SK-N-SH (cell line): ENCODE measurements at regions of chr7 and their contacts with region 1.

Region 1: GRCh38 chr7:90424720-90425119 is 21.5 kb downstream of the CLDN12 start:
- DNase-seq: no peak
- H3K4me3 ChIP-seq: no peak overlapping the region
- H3K27ac ChIP-seq: no peak overlapping the region
- H3K4me1 ChIP-seq: no peaks in the 10 kb centered on the region
- H3K27me3 ChIP-seq: no peaks in the 10 kb centered on the region
- CTCF ChIP-seq: no peak
- EP300 ChIP-seq: no peak
- RAD21 ChIP-seq: no peak

Region 2: DNA sequence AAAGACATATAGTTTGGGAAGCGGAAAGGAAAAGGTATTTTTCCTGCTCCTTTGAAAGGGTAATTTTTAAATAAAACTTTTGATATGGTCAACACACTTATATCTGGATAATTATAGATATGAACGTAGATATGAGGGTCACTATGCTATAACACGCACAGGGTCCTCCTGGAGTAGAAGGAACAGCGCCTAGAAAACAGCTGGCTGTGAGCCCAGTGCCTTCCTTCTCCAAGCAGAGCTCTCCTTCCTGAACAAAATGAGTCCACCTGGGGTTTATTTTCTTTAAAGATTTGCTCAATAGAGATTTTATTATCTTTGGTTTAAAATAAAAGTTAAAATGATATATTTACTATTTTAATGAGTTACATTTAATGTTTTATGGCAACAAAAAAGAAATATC is 257.4 kb before region 1 on chr7:
- CTCF ChIA-PET with region 1: interaction called, 15 read pairs
- POLR2A ChIA-PET with region 1: no interaction called
- DNase-seq: no peak
- H3K4me3 ChIP-seq: no peak overlapping the region
- H3K27ac ChIP-seq: no peak overlapping the region
- H3K4me1 ChIP-seq: no peaks in the 10 kb centered on the region
- H3K27me3 ChIP-seq: no peaks in the 10 kb centered on the region
- CTCF ChIP-seq: no peak
- EP300 ChIP-seq: no peak
- RAD21 ChIP-seq: no peak

Region 3: DNA sequence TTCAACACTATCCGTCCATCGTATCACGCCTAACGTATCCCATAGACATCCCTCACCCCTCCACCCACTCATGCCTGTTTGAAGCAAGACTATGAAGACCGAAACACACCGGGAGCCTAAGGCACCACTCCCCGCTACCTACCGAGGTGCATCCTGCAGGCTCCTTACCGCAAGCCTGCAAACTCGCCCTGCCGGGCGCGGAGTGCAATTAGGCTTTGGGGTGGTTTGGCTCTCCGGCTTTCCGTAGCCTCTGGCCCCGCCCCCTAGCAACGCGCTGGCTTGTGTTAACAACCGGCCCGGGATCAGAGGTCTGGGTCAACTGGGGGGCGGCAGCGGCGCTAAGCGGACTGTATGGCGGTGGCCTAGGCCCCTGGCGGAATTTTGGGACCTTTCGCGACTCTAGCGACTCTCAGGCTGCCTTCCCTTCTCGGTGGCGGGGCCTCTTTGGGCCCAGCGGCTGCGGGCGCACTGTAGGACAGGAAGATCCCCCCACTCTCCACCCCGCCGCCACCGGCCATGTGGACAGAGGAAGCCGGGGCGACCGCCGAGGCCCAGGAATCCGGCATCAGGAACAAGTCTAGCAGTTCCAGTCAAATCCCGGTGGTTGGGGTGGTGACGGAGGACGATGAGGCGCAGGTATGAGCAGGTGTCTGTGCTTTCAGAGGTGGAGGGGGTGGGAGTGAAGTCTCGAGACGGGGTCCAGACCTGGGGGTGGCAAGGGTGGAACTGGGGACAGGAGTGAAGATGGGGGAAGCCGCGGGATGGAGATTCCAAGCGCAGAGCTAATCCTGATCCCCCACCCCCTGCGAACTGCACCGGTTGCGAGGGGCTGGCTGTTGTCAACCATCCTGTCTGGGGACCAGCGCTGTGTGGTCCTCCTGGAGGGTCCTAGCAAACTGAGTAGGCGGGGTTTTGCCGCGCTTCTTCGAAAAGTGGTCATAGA is 179.5 kb before region 1 on chr7 and contains the start of gene CFAP69:
- CTCF ChIA-PET with region 1: interaction called, 12 read pairs
- POLR2A ChIA-PET with region 1: no interaction called
- DNase-seq: peak; percentile 94
- H3K4me3 ChIP-seq: peak within 1 kb of the TSS; percentile 76 to 86
- H3K27ac ChIP-seq: peak within 1 kb of the TSS; percentile 36 to 44; a peak in 3 of 4 replicates
- H3K4me1 ChIP-seq: peaks cover 0 to 16% of the 10 kb centered on the region in 2 experiments; a peak in 1 of 4 replicates
- H3K27me3 ChIP-seq: no peaks in the 10 kb centered on the region
- CTCF ChIP-seq: peak; percentile 43
- EP300 ChIP-seq: peak in 1 of 2 experiments; percentile 39; a peak in 2 of 4 replicates
- RAD21 ChIP-seq: peak; percentile 35
- polyA plus RNA-seq, gene CFAP69: 2.3 and 2.8 TPM in 2 replicates

Region 4: GRCh38 chr7:90312745-90313144 is 112.0 kb before region 1 on chr7:
- CTCF ChIA-PET with region 1: interaction called, 37 read pairs
- POLR2A ChIA-PET with region 1: interaction called, 3 read pairs
- DNase-seq: no peak
- H3K4me3 ChIP-seq: no peak overlapping the region
- H3K27ac ChIP-seq: no peak overlapping the region
- H3K4me1 ChIP-seq: no peaks in the 10 kb centered on the region; a peak in 1 of 4 replicates
- H3K27me3 ChIP-seq: no peaks in the 10 kb centered on the region
- CTCF ChIP-seq: peak; percentile 42
- EP300 ChIP-seq: no peak
- RAD21 ChIP-seq: peak; percentile 47

Region 5: GRCh38 chr7:90412458-90413184 is 12.1 kb before region 1 on chr7:
- CTCF ChIA-PET with region 1: interaction called, 47 read pairs
- POLR2A ChIA-PET with region 1: no interaction called
- DNase-seq: peak; percentile 30
- H3K4me3 ChIP-seq: no peak overlapping the region
- H3K27ac ChIP-seq: no peak overlapping the region; a peak in 1 of 4 replicates
- H3K4me1 ChIP-seq: peaks cover 5 to 6% of the 10 kb centered on the region in 2 experiments; a peak in 2 of 4 replicates
- H3K27me3 ChIP-seq: no peaks in the 10 kb centered on the region
- CTCF ChIP-seq: peak; percentile 49; the same call in 1 of the 2 replicates
- EP300 ChIP-seq: no peak
- RAD21 ChIP-seq: peak; percentile 65